ENCODE measurements at regions of chr1 and their contacts with region 1.

Region 1: GRCh38 chr1:36149237-36149972 is at the start of gene TRAPPC3:
- DNase-seq: peak; percentile 99
- H3K4me3 Mint-ChIP-seq: peak within 1 kb of the TSS; percentile 100
- H3K27ac Mint-ChIP-seq: peak within 1 kb of the TSS; percentile 98
- H3K4me1 Mint-ChIP-seq: peaks cover 22% of the 10 kb centered on the region
- H3K27me3 Mint-ChIP-seq: no peaks in the 10 kb centered on the region
- CTCF ChIP-seq: peak; percentile 79
- total RNA-seq, gene TRAPPC3: 70.3 and 71.5 TPM in 2 replicates

Region 2: GRCh38 chr1:36109041-36109679 is 40.2 kb before region 1 on chr1:
- CTCF ChIA-PET with region 1: no interaction called
- intact Hi-C with region 1: no loop called
- DNase-seq: peak; percentile 58
- H3K4me3 Mint-ChIP-seq: no peak overlapping the region
- H3K27ac Mint-ChIP-seq: no peak overlapping the region
- H3K4me1 Mint-ChIP-seq: peaks cover 9% of the 10 kb centered on the region
- H3K27me3 Mint-ChIP-seq: peaks cover 40% of the 10 kb centered on the region
- CTCF ChIP-seq: no peak

Region 3: GRCh38 chr1:36134505-36135329 is 14.7 kb before region 1 on chr1:
- CTCF ChIA-PET with region 1: interaction called, 29 read pairs
- intact Hi-C with region 1: no loop called
- DNase-seq: peak; percentile 66
- H3K4me3 Mint-ChIP-seq: no peak overlapping the region
- H3K27ac Mint-ChIP-seq: peak overlapping the region; percentile 63
- H3K4me1 Mint-ChIP-seq: peaks cover 30% of the 10 kb centered on the region
- H3K27me3 Mint-ChIP-seq: no peaks in the 10 kb centered on the region
- CTCF ChIP-seq: peak; percentile 88

Region 4: GRCh38 chr1:36160949-36161485 is 11.6 kb after region 1 on chr1:
- CTCF ChIA-PET with region 1: interaction called, 23 read pairs
- intact Hi-C with region 1: no loop called
- DNase-seq: peak; percentile 65
- H3K4me3 Mint-ChIP-seq: peak overlapping the region; percentile 70
- H3K27ac Mint-ChIP-seq: peak overlapping the region; percentile 91
- H3K4me1 Mint-ChIP-seq: peaks cover 52% of the 10 kb centered on the region
- H3K27me3 Mint-ChIP-seq: no peaks in the 10 kb centered on the region
- CTCF ChIP-seq: peak; percentile 53

Region 5: DNA sequence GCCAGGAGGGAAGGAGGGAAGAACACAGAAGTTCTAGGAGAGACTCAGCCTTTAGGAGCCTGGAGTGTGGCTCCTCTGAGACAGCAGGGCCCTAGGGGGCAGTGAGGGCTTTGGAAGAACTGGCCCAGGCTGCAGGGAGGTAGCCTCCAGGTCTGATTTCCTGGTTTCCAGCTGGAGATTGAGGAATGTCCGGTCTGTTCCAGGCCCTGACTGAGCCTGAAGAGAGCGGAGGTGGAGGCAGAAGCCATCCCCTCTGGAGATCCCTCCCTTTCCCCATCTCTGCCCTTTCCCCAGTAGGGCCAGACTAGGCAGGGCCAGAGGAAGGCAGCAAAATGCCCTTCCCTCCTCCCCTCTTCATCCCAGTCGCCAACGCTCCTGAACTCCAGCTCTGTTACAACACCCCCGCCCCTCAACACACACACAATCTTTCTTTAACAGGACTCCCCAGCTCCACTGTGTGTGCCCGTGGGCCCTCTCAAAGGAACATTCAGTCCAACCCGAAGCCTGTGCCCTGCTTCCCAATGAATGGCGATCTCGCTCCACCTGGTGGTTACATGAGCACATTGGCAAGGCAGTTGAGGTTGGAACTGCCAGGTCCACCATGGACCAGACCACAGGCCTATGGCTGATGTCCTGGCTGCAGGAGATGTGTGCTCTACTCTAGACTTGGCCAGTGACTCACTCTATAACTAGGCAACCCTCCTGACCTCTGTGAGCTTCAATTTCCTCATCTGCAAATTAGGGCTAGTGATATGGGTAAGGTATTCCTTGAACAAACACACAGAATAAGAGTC is 38.6 kb after region 1 on chr1:
- CTCF ChIA-PET with region 1: interaction called, 50 read pairs
- intact Hi-C with region 1: loop called (anchors 1 kb)
- DNase-seq: peak; percentile 84
- H3K4me3 Mint-ChIP-seq: no peak overlapping the region
- H3K27ac Mint-ChIP-seq: peak overlapping the region; percentile 84
- H3K4me1 Mint-ChIP-seq: peaks cover 10% of the 10 kb centered on the region
- H3K27me3 Mint-ChIP-seq: no peaks in the 10 kb centered on the region
- CTCF ChIP-seq: peak; percentile 84

Region 6: DNA sequence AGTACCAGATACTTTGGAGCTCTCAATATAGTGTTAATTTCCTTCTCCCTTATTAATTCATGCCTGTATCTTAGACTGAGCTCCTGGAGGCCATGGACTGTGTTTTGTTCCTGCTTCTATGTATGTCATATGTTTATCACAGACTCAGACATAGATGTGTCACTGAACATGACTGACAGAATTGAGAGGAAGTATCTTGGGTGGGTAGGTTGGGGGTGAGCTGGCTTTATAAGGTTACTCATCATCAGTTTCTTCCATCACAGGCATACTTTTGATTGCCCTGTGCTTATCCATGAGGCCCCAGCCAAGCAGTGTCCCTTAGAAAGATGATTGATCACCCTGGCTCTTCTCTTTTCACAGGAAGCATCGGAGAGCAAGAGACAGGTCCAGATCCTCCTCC is 151.1 kb after region 1 on chr1:
- CTCF ChIA-PET with region 1: interaction called, 5 read pairs
- intact Hi-C with region 1: loop called (anchors 5 kb)
- DNase-seq: no peak
- H3K4me3 Mint-ChIP-seq: peak overlapping the region; percentile 41
- H3K27ac Mint-ChIP-seq: peak overlapping the region; percentile 94
- H3K4me1 Mint-ChIP-seq: peaks cover 22% of the 10 kb centered on the region
- H3K27me3 Mint-ChIP-seq: no peaks in the 10 kb centered on the region
- CTCF ChIP-seq: no peak

Measured in Calu3 (cell line).